ENCODE measurements at regions of chr12 and their contacts with region 1.

Region 1: DNA sequence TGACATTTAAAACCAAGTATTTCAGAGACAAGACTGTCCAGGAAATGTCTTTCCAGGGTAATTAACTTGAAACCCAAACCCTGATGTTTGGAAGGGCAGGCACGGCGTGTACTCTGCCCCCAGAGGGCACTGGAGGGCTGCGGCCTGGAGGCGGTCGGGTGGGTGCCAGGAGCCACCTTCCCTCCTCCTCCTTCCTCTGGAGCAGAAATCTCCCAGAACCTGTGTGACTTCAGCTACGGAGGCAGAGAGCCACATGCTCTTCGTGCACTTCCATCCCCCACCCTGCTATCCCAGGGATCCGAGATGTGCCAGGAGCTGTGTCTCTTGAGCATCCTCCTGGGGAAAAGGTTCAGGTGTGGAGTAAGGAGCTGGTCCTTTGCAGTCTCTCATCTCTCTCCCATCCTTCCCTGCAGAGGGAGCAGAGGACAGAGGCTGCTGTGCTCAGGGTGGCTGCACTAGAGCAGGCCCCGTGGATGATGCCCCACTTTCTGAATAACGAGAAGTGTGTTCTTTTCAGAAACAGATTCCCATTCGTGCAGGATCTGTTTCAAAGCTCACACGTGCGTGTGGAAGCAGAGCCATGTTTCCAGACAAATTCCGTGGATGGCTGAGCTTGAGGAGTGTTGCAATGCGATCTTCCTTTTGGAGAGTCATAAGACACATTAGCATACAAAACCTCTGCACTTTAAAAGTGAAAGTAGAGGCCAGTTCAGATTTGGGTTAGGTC is 162.8 kb downstream of the ADGRD1 start:
- DNase-seq: peak in 1 of 2 experiments; percentile 75
- H3K4me3 ChIP-seq: no peak overlapping the region
- H3K27ac ChIP-seq: no peak overlapping the region
- H3K4me1 ChIP-seq: peaks cover 0 to 7% (median 3%) of the 10 kb centered on the region in 4 experiments; a peak in 4 of 7 replicates
- H3K27me3 ChIP-seq: no peaks in the 10 kb centered on the region; a peak in 1 of 7 replicates
- CTCF ChIP-seq: peak; percentile 81 to 91 (median 87)
- EP300 ChIP-seq: no peak
- POLR2A ChIP-seq: no peak
- RAD21 ChIP-seq: peak; percentile 90 to 93

Region 2: GRCh38 chr12:130916251-130916911 is 200.2 kb before region 1 on chr12:
- CTCF ChIA-PET with region 1: interaction called, 18 read pairs
- POLR2A ChIA-PET with region 1: no interaction called
- DNase-seq: peak; percentile 53 to 75
- H3K4me3 ChIP-seq: peak overlapping the region in 1 of 4 experiments; percentile 22; a peak in 1 of 8 replicates
- H3K27ac ChIP-seq: no peak overlapping the region
- H3K4me1 ChIP-seq: peaks cover 0 to 2% (median 0%) of the 10 kb centered on the region in 4 experiments; a peak in 2 of 7 replicates
- H3K27me3 ChIP-seq: no peaks in the 10 kb centered on the region; a peak in 1 of 7 replicates
- CTCF ChIP-seq: peak; percentile 95 to 98 (median 96)
- EP300 ChIP-seq: 0 out of 3 replicates have a peak, but pooled peaks of 1 of the 2 experiments have one; percentile 28
- POLR2A ChIP-seq: no peak
- RAD21 ChIP-seq: peak; percentile 98 to 100

Region 3: GRCh38 chr12:131104463-131105350 is 11.8 kb before region 1 on chr12:
- CTCF ChIA-PET with region 1: interaction called, 126 read pairs
- POLR2A ChIA-PET with region 1: interaction called, 5 read pairs
- DNase-seq: peak; percentile 63 to 96
- H3K4me3 ChIP-seq: no peak overlapping the region
- H3K27ac ChIP-seq: no peak overlapping the region
- H3K4me1 ChIP-seq: no peaks in the 10 kb centered on the region; a peak in 1 of 7 replicates
- H3K27me3 ChIP-seq: no peaks in the 10 kb centered on the region
- CTCF ChIP-seq: peak; percentile 99 to 100 (median 99)
- EP300 ChIP-seq: no peak
- POLR2A ChIP-seq: no peak
- RAD21 ChIP-seq: peak; percentile 91 to 92

Region 4: GRCh38 chr12:131159660-131160059 is 43.1 kb after region 1 on chr12:
- CTCF ChIA-PET with region 1: interaction called, 16 read pairs
- POLR2A ChIA-PET with region 1: no interaction called
- DNase-seq: peak in 1 of 2 experiments; percentile 13
- H3K4me3 ChIP-seq: no peak overlapping the region
- H3K27ac ChIP-seq: no peak overlapping the region
- H3K4me1 ChIP-seq: no peaks in the 10 kb centered on the region
- H3K27me3 ChIP-seq: no peaks in the 10 kb centered on the region
- CTCF ChIP-seq: peak; percentile 25 to 69 (median 54)
- EP300 ChIP-seq: no peak
- POLR2A ChIP-seq: no peak
- RAD21 ChIP-seq: peak; percentile 68 to 75

Region 5: GRCh38 chr12:131229426-131230339 is 113.1 kb after region 1 on chr12:
- CTCF ChIA-PET with region 1: interaction called, 11 read pairs
- POLR2A ChIA-PET with region 1: no interaction called
- DNase-seq: peak in 1 of 2 experiments; percentile 63
- H3K4me3 ChIP-seq: peak overlapping the region in 1 of 4 experiments; percentile 20; a peak in 2 of 8 replicates
- H3K27ac ChIP-seq: peak overlapping the region; percentile 51; the same call in 1 of the 2 replicates
- H3K4me1 ChIP-seq: peaks cover 0 to 21% (median 11%) of the 10 kb centered on the region in 4 experiments; a peak in 5 of 7 replicates
- H3K27me3 ChIP-seq: no peaks in the 10 kb centered on the region
- CTCF ChIP-seq: peak; percentile 55 to 66 (median 60)
- EP300 ChIP-seq: no peak
- POLR2A ChIP-seq: no peak; a peak in 1 of 3 replicates
- RAD21 ChIP-seq: peak; percentile 15 to 44; a peak in 1 of 4 replicates

Region 6: GRCh38 chr12:131454418-131455217 is 338.1 kb after region 1 on chr12:
- CTCF ChIA-PET with region 1: interaction called, 14 read pairs
- POLR2A ChIA-PET with region 1: no interaction called
- DNase-seq: peak; percentile 63 to 72
- H3K4me3 ChIP-seq: no peak overlapping the region
- H3K27ac ChIP-seq: no peak overlapping the region
- H3K4me1 ChIP-seq: no peaks in the 10 kb centered on the region
- H3K27me3 ChIP-seq: no peaks in the 10 kb centered on the region
- CTCF ChIP-seq: peak; percentile 81 to 91 (median 91)
- EP300 ChIP-seq: peak in 1 of 2 experiments; percentile 38; a peak in 1 of 3 replicates
- POLR2A ChIP-seq: no peak
- RAD21 ChIP-seq: peak; percentile 75 to 83